Heart left ventricle (tissue), 16 donors: ENCODE measurements at regions of chr12 and their contacts with region 1.

Region 1: DNA sequence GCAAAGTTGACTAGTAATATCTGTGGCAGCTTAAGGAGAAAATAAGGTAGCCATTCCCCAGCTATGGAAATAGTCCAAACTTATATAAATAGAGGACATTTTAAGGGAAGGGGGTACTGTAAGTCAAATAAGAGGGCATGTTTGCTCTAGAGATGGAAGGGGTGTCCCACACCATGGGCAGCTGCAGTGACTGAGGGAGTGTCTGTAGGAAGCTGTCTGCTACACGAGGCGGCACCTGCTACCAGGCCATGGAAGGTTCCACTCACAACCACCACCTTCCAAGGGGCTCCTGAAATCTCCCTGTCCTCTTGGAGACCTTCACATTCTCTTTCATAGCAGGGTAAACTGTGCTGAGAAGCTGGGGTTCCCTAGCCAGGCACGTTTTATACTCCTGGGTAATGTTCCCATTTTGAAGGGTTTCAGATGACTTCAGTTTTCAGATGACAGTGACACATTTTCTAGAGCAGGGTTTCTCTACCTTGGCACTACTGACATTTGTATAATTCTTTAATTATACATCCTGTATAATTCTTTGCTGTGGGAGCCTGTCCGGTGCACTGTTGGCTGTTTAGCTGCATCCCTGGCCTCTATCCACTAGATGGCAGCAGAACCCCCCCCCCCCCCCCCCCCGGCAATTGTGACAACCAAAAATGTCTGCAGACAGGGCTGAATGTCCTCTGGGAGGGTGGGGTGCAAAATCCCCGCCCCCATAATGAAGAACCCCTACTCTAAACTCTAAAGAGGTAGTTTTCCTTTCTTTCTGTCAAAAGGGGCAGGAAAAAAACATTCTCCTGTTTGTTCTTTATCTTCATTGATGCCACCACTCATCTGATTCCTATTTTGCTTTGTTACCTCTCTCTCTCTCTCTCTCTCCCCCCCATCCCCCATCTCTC is 11.6 kb upstream of the SMCO2 start:
- DNase-seq: no peak
- ATAC-seq: peak; percentile 53 to 63 (median 59)
- H3K4me3 ChIP-seq: no peak overlapping the region
- H3K27ac ChIP-seq: peak overlapping the region in 6 of 12 donors; percentile 3 to 45 (median 27)
- H3K4me1 ChIP-seq: peaks cover 0 to 19% (median 3%) of the 10 kb centered on the region in 12 donors
- H3K27me3 ChIP-seq: no peaks in the 10 kb centered on the region
- CTCF ChIP-seq: peak; percentile 30 to 77 (median 57)
- POLR2A ChIP-seq: no peak

Region 2: DNA sequence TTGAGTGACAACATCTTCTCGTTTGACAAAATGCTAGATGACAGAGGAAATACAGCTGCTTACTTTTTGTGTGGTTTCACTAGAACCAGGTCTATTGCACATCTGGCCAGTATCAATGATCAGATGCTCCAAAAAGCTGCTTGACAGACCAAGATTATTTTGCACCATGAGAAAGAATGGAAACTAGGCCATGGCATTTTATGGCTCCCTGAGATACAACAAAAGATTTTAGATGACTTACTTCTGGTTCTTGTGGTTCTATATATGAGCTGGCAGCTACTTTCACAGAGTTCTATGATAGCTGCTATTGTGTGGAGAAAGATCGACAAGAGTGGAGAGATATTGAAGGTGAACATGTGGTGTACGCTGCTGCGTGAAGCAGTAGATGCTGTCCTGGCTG is 63.2 kb after region 1 on chr12:
- intact Hi-C with region 1: loop called in 1 of 10 experiments (anchors 5 kb)
- DNase-seq: no peak
- ATAC-seq: no peak
- H3K4me3 ChIP-seq: no peak overlapping the region
- H3K27ac ChIP-seq: no peak overlapping the region
- H3K4me1 ChIP-seq: peaks cover 0 to 8% (median 0%) of the 10 kb centered on the region in 12 donors
- H3K27me3 ChIP-seq: no peaks in the 10 kb centered on the region
- CTCF ChIP-seq: no peak
- POLR2A ChIP-seq: no peak

Region 3: DNA sequence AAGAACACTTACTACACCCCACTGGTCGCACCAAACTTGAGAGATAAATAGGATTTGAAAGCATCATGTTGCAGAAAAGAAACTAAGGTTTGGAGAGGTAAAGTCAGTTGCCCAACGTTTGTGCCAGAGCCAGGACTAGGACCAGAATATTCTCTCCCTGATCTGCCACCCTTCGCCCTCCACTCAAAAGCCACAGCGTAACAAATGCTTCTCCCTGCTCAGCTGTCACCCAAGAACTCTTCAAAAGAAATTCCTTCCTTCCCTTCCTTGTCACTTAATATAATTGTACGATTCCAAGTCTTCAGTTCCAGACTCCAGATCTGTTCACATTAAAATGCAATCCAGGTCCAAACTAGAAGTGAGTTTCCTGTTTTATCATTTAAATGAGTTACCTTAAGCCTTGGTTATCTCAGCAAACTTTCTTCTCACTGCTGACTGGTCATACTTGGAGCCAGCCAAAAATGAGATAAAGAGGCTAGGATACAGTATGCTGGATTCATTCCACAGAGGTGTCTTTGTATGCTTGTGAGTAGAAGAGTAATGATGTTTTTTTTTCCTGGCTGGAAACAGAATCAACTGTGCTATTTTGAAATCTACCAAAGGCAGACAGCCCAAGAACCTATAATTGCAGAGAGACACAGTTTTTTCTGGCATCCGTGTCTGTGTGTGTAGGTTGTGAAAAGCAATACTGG is 76.3 kb after region 1 on chr12:
- intact Hi-C with region 1: loop called in 2 of 10 experiments (anchors 5 kb)
- DNase-seq: no peak
- ATAC-seq: peak; percentile 24 to 70 (median 54)
- H3K4me3 ChIP-seq: no peak overlapping the region
- H3K27ac ChIP-seq: peak overlapping the region; percentile 49 to 85 (median 74)
- H3K4me1 ChIP-seq: peaks cover 0 to 30% (median 9%) of the 10 kb centered on the region in 12 donors
- H3K27me3 ChIP-seq: no peaks in the 10 kb centered on the region
- CTCF ChIP-seq: no peak
- POLR2A ChIP-seq: no peak

Region 4: DNA sequence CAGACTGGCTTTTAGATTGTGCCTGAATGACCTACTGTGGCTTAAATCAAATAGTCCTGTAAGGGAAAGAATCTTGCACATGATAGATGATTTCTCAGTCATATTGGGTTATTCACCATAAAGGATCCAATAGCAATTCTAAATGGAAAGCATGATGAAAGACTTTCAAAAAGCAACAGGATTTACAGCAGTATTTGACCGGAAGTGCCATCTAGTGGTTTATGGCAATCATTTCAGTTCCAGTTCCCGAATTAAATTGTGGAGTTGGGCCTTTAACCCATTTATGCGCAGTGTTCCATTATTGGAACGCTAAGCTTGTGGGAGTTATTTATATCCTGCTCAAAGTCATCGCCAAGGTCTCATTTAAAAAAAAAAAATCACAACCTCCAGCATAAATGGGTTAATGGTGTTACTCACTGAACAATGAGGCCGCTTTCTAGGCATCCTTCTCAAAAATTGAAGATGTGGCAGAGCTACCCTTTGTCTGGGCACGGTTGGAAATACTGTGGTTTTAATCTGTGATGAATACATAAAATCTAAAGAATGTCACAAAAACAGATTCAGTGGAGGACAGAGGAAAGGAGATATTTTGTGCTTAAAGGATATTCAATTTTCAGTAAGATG is 200.5 kb after region 1 on chr12:
- intact Hi-C with region 1: loop called in 1 of 10 experiments (anchors 10 kb)
- DNase-seq: no peak
- ATAC-seq: peak in 2 of 4 donors; percentile 24 to 26
- H3K4me3 ChIP-seq: no peak overlapping the region
- H3K27ac ChIP-seq: peak overlapping the region in 1 of 12 donors; percentile 11
- H3K4me1 ChIP-seq: peaks cover 0 to 55% (median 28%) of the 10 kb centered on the region in 12 donors
- H3K27me3 ChIP-seq: no peaks in the 10 kb centered on the region
- CTCF ChIP-seq: peak; percentile 44 to 77 (median 64)
- POLR2A ChIP-seq: no peak

Region 5: GRCh38 chr12:27652174-27652763 is 217.3 kb after region 1 on chr12:
- intact Hi-C with region 1: loop called in 5 of 10 experiments (anchors 5 kb)
- DNase-seq: peak in 2 of 5 donors; percentile 56 to 73
- ATAC-seq: peak; percentile 67 to 87 (median 78)
- H3K4me3 ChIP-seq: no peak overlapping the region
- H3K27ac ChIP-seq: no peak overlapping the region
- H3K4me1 ChIP-seq: peaks cover 0 to 10% (median 2%) of the 10 kb centered on the region in 12 donors
- H3K27me3 ChIP-seq: no peaks in the 10 kb centered on the region
- CTCF ChIP-seq: peak; percentile 79 to 95 (median 90)
- POLR2A ChIP-seq: no peak